A549 (cell line): ENCODE measurements at regions of chr6 and their contacts with region 1.

Region 1: DNA sequence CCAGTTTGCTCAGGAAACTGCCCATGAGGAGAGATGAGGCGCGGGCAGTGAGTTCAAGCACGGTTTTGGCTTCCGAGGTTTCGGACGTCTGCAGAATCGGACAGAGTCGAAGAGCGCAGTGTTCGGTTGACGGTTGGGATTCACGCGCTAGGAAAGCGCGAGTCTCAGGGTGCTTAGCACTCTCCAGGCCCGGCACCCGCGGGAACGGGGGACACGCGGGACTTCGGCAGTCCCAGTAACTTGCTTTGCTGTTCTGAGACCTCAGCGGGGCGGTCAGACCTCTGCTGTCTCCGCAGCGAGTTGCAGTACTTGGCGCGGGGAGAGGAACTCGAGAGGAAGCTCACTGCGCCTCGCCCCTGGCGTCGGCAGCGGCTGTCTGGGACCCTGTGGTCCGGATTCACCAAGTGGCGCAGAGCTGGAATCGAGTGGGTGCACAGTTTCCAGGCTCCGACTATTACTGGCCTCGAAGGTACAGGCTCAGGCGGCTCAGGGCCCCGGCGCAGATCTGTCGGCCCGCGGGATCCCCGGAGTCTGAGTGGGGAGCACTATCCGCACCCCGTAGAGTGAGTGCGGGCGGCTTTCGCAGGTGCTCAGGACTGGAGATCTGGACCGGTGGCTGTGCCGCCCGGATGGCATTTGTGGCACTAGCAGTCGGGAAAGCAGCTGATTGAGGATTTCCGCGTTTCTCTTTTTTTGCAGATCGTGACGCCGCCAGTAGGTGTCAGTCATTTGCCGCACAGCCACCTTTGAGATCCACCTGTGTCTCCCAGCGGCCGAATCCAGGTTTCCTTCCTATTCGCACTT is at the start of gene POM121L2:
- DNase-seq: peak; percentile 67 to 80
- ATAC-seq: peak; percentile 87 to 88
- H3K4me3 ChIP-seq: peak within 1 kb of the TSS; percentile 62
- H3K27ac ChIP-seq: peak within 1 kb of the TSS in 1 of 2 experiments; percentile 83; a peak in 3 of 6 replicates
- H3K4me1 ChIP-seq: no peaks in the 10 kb centered on the region
- CTCF ChIP-seq: peak; percentile 66
- EP300 ChIP-seq: no peak
- POLR2A ChIP-seq: no peak
- RAD21 ChIP-seq: peak; percentile 75 to 80
- polyA plus RNA-seq, gene POM121L2: 0.09 TPM in 1 of 2 replicates, not detected in the other

Region 2: DNA sequence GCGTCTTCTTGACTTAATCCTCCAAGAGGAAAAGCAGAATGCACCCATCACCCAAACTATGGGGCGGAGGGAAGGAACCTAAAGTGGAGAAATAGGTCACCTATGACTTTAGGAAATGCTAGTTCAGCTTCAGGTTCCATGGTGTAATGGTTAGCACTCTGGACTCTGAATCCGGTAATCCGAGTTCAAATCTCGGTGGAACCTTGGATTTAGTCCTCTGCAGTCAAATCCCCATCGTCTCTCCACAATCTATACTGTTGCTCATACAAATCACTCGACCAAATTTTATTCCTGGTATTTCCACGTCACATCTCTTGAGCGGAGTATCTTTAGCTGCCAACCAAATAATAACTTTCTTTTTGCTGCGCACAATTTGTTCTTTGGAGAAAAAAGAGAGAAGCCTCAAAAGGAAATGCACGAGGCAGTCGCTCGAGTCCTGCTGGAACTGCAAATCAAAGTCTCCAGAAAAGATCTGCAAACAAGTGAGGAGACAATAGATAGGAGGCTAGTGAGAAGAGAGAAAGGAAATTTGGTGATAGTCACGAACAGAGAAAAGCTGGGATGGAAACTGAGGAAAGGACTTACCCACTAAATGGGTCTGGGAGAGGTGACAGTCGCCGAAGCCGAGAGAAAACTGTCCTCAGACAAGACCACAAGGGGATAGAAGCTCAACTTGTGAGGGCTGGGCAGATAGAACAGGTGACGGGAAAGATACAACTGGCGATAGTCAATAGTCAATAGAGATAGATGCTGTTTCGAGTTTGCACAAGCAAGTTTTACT is 16.9 kb before region 1 on chr6:
- CTCF ChIA-PET with region 1: interaction called, 10 read pairs
- POLR2A ChIA-PET with region 1: no interaction called
- DNase-seq: peak in 1 of 2 experiments; percentile 88
- ATAC-seq: peak; percentile 63 to 83
- H3K4me3 ChIP-seq: peak overlapping the region; percentile 58
- H3K27ac ChIP-seq: peak overlapping the region; percentile 53 to 79; a peak in 5 of 6 replicates
- H3K4me1 ChIP-seq: peaks cover 15% of the 10 kb centered on the region; the same call in 2 of the 3 replicates
- CTCF ChIP-seq: no peak
- EP300 ChIP-seq: no peak
- POLR2A ChIP-seq: no peak
- RAD21 ChIP-seq: no peak

Region 3: GRCh38 chr6:27452496-27452897 is 140.1 kb after region 1 on chr6:
- CTCF ChIA-PET with region 1: no interaction called
- POLR2A ChIA-PET with region 1: no interaction called
- DNase-seq: peak in 1 of 2 experiments; percentile 21
- ATAC-seq: no peak
- H3K4me3 ChIP-seq: no peak overlapping the region
- H3K27ac ChIP-seq: no peak overlapping the region
- H3K4me1 ChIP-seq: no peaks in the 10 kb centered on the region
- CTCF ChIP-seq: no peak
- EP300 ChIP-seq: no peak
- POLR2A ChIP-seq: no peak
- RAD21 ChIP-seq: no peak